ENCODE measurements at regions of chr1 and their contacts with region 1.

Region 1: GRCh38 chr1:164786980-164787833 is 228.2 kb downstream of the PBX1 start:
- DNase-seq: no peak
- H3K4me3 ChIP-seq: peak overlapping the region in 3 of 4 donors; percentile 5 to 38 (median 16)
- H3K27ac ChIP-seq: peak overlapping the region; percentile 74 to 85 (median 82)
- H3K4me1 ChIP-seq: peaks cover 41 to 89% (median 62%) of the 10 kb centered on the region in 3 donors
- H3K27me3 ChIP-seq: no peaks in the 10 kb centered on the region
- CTCF ChIP-seq: peak; percentile 64 to 96 (median 92)
- POLR2A ChIP-seq: no peak

Region 2: DNA sequence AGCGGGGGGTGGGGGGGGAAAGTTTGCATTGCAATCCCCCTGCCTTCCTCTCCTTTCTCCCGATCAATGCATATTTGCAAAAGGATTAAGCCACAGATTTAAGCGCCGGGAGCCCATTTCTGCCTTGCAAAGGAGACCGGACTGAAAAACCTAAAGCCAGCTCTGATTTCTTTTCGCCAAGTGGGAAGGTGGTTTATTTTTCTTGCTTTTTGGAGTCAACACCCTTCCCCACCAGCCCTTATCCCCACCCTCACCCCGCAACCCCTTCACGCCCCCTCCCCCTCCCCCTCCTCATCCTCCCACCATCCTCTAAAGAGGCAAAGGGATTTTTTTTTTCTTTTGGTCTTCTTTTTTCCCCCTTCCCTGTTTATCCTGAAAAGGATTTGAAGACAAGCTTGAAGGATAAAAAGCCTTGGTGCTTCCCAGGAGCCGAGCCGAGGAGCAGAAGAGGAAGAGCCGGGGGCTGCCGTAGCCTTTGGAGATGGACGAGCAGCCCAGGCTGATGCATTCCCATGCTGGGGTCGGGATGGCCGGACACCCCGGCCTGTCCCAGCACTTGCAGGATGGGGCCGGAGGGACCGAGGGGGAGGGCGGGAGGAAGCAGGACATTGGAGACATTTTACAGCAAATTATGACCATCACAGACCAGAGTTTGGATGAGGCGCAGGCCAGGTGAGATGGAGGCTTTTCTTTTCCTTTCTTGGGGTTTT is 227.7 kb before region 1 on chr1:
- intact Hi-C with region 1: loop called (anchors 10 kb)
- DNase-seq: no peak
- H3K4me3 ChIP-seq: peak overlapping the region; percentile 72 to 80 (median 75)
- H3K27ac ChIP-seq: peak overlapping the region; percentile 82 to 90 (median 88)
- H3K4me1 ChIP-seq: peaks cover 0 to 40% (median 6%) of the 10 kb centered on the region in 3 donors
- H3K27me3 ChIP-seq: no peaks in the 10 kb centered on the region
- CTCF ChIP-seq: no peak
- POLR2A ChIP-seq: no peak

Region 3: DNA sequence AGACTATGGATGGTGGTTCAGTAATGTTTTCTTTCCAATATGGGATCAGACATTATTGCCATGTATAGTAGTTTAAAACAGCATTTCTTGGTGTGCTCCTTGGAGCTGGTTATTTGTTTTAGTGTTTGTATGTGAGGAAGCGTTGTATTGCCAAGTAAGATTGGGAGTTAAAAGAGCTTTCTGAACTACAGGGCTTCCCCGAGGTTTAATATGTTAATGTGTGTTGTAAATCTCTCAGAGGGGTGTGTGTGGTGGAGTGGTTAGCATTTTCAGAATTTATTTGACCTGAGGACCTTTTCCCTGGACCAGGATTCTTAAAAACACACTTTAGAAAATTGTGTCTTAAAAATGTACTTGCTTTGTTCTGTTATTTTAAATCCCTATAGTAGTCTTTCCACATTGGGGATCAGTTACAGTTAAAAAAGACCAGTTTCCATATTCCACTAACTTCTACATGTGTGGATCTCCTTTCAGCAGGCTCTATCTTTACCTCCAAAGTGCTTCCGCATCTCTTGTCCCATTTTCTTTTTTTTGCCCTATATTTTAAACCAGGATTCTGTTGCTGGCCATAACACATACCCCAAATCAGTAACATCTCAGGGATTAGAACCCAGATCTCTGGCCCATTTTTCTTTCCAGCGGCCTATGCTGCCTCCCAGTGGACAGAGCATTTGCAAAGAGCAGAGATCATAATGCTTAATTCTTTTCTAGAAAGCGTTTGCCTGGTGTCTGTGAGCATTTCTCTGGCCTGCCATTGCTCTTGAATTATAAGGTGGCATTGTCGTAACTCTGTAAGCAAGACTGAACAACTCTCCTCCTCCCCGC is 169.6 kb before region 1 on chr1:
- intact Hi-C with region 1: loop called (anchors 10 kb)
- DNase-seq: no peak
- H3K4me3 ChIP-seq: no peak overlapping the region
- H3K27ac ChIP-seq: peak overlapping the region in 2 of 4 donors; percentile 79 to 85
- H3K4me1 ChIP-seq: peaks cover 27 to 99% (median 42%) of the 10 kb centered on the region in 3 donors
- H3K27me3 ChIP-seq: no peaks in the 10 kb centered on the region
- CTCF ChIP-seq: peak in 5 of 6 experiments; percentile 33 to 59 (median 48)
- POLR2A ChIP-seq: no peak

Measured in esophagus squamous epithelium (tissue), 5 donors.